ENCODE measurements at regions of chr15 and their contacts with region 1.

Region 1: DNA sequence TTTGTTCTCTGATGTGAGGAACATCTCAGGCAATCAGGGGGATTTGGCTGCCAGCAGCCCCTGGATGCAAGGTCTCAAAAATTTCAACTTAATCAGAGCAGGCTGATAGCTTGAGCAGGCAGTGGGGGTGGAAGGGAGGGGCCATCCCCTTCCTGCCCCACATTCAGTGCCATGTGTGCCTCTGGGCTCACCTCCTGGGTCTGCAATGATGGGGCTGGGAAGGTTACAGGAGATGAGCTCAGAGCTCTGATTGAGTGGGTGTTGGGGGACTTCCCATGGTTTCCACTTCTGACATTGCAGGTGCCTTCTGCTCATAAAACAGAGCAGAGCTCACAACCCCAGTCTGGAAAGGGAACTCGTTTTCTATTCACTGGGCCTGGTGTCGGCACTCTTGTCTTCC is 37.0 kb downstream of the PARP16 start:
- DNase-seq: no peak
- H3K4me3 ChIP-seq: no peak overlapping the region
- H3K27ac ChIP-seq: no peak overlapping the region
- H3K4me1 ChIP-seq: no peaks in the 10 kb centered on the region
- H3K27me3 ChIP-seq: no peaks in the 10 kb centered on the region
- CTCF ChIP-seq: no peak

Region 2: GRCh38 chr15:65212097-65212496 is 37.5 kb before region 1 on chr15:
- intact Hi-C with region 1: loop called (anchors 5 kb)
- DNase-seq: no peak
- H3K4me3 ChIP-seq: no peak overlapping the region
- H3K27ac ChIP-seq: no peak overlapping the region
- H3K4me1 ChIP-seq: peaks cover 0 to 6% (median 0%) of the 10 kb centered on the region in 4 donors
- H3K27me3 ChIP-seq: peaks cover 0 to 3% of the 10 kb centered on the region in 2 donors
- CTCF ChIP-seq: no peak

Region 3: GRCh38 chr15:65304389-65305144 is 54.9 kb after region 1 on chr15 and contains the start of gene RNU5B-1:
- intact Hi-C with region 1: no loop called
- DNase-seq: peak; percentile 68 to 87
- H3K4me3 ChIP-seq: peak within 1 kb of the TSS; percentile 56 to 70
- H3K27ac ChIP-seq: peak within 1 kb of the TSS; percentile 80 to 85
- H3K4me1 ChIP-seq: peaks cover 0 to 14% (median 4%) of the 10 kb centered on the region in 4 donors
- H3K27me3 ChIP-seq: no peaks in the 10 kb centered on the region
- CTCF ChIP-seq: peak in 1 of 2 experiments; percentile 86